ENCODE measurements at regions of chr17 and their contacts with region 1.

Region 1: DNA sequence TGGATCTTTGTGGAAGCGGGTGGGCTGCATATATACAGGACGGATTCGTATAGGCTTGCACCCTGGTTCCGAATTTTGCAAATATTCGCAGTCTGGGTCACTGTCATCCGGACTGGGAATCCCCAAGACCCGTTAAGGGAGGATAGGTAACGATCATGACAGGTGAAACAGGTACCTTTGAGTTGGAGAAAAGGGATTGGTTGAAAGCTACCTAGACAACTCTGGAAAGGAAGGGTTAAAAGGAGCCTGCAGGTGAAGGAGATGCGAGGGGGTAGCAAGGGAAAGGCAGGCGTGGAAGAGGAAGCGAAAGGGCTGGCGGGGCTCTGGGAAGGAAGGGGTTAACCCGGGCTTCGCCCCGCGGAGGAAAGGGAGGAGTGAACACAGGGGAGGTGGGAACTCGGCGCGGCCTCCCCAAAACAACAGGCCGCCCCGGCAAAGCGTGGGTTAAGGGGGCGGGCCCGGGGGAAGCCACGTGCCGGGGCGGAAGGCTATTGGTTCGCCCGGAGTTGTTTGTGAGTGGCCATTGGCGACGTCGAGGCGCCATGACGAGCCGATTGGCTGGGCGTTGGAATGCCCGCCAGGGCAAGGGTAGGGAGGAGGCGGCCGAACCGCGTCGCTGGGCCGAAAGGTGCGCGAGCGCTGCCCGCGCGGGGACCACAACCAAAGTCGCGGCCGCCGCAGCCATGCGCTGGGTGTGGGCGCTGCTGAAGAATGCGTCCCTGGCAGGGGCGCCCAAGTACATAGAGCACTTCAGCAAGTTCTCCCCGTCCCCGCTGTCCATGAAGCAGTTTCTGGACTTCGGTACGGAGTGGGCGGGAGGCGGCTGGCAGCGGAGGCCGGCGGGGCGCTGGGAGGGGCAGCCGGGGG is at the start of gene PDK2:
- DNase-seq: peak; percentile 96 to 98 (median 98)
- H3K4me3 ChIP-seq: peak within 1 kb of the TSS; percentile 81 to 97
- H3K4me3 Mint-ChIP-seq: peak within 1 kb of the TSS; percentile 95 to 99 (median 98)
- H3K27ac ChIP-seq: peak within 1 kb of the TSS; percentile 80
- H3K27ac Mint-ChIP-seq: peak within 1 kb of the TSS; percentile 92 to 99 (median 97)
- H3K4me1 ChIP-seq: peaks cover 25% of the 10 kb centered on the region
- H3K4me1 Mint-ChIP-seq: peaks cover 14 to 36% (median 24%) of the 10 kb centered on the region in 4 donors
- H3K27me3 ChIP-seq: no peaks in the 10 kb centered on the region
- H3K27me3 Mint-ChIP-seq: peaks cover 0 to 2% of the 10 kb centered on the region in 2 donors
- total RNA-seq, gene PDK2: 39.1 to 40.6 TPM

Region 2: GRCh38 chr17:49677933-49678847 is 416.8 kb before region 1 on chr17 and contains the start of gene SPOP:
- CTCF ChIA-PET with region 1: interaction called, 3 read pairs
- POLR2A ChIA-PET with region 1: interaction called, 3 read pairs
- intact Hi-C with region 1: loop called (anchors 1 kb)
- DNase-seq: peak; percentile 99 to 100 (median 100)
- H3K4me3 ChIP-seq: peak within 1 kb of the TSS; percentile 95 to 100
- H3K4me3 Mint-ChIP-seq: peak within 1 kb of the TSS; percentile 91 to 99 (median 94)
- H3K27ac ChIP-seq: peak within 1 kb of the TSS; percentile 94
- H3K27ac Mint-ChIP-seq: peak within 1 kb of the TSS; percentile 93 to 99 (median 98)
- H3K4me1 ChIP-seq: peaks cover 42% of the 10 kb centered on the region
- H3K4me1 Mint-ChIP-seq: peaks cover 35 to 52% (median 42%) of the 10 kb centered on the region in 4 donors
- H3K27me3 ChIP-seq: no peaks in the 10 kb centered on the region
- H3K27me3 Mint-ChIP-seq: peaks cover 0 to 1% of the 10 kb centered on the region in 2 donors
- total RNA-seq, gene SPOP: 83.1 to 86.1 TPM

Region 3: DNA sequence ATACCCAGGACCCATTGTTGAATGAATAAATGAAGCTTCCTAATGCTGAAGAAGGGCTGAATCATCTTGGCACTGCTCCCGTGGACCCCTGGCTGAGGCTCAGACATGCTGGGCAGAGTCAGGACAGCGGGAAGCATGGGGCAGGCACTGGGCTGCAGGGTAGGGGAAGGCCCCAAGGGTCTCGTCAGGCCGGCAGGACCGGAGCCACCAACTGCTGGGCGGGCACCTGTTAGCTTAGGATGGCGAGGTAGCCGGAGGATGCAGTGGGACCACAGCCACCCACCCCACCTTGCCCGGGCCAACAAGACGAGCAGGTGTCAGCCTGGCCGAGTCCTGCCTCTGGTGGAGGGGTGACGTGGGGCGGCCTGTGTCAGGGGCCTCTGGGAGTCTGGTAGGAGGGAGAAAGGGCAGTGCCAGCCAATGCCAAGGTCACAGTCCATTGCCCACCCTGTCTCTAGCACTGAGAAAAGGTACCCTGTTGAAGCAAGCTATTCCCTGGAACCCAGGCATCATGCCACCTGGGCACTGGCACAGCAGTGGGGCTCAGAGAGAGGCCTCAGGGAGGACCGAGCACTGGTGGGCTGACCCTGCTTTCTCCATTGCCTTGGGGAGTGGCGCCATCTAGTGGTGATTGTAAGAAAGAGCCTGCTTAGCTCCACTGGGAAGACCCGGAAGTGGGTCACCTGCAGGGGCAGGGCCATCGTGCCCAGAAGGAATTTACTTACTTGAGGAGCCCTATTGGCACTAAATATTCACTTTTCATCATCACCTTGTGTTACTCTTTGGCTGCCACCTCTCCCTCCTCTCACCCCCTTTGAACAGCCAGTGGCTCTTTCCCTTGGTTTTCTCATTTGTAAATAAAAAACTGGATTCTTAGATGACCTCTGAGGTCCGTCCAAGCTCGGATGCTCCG is 96.9 kb before region 1 on chr17:
- CTCF ChIA-PET with region 1: interaction called, 12 read pairs
- POLR2A ChIA-PET with region 1: interaction called, 3 read pairs
- intact Hi-C with region 1: no loop called
- DNase-seq: peak; percentile 80 to 83 (median 82)
- H3K4me3 ChIP-seq: no peak overlapping the region
- H3K4me3 Mint-ChIP-seq: peak overlapping the region in 1 of 8 donors; percentile 43
- H3K27ac ChIP-seq: no peak overlapping the region
- H3K27ac Mint-ChIP-seq: peak overlapping the region in 1 of 7 donors; percentile 55
- H3K4me1 ChIP-seq: peaks cover 35% of the 10 kb centered on the region
- H3K4me1 Mint-ChIP-seq: peaks cover 19 to 43% (median 25%) of the 10 kb centered on the region in 4 donors
- H3K27me3 ChIP-seq: peaks cover 61% of the 10 kb centered on the region
- H3K27me3 Mint-ChIP-seq: peaks cover 62 to 64% of the 10 kb centered on the region in 2 donors

Region 4: DNA sequence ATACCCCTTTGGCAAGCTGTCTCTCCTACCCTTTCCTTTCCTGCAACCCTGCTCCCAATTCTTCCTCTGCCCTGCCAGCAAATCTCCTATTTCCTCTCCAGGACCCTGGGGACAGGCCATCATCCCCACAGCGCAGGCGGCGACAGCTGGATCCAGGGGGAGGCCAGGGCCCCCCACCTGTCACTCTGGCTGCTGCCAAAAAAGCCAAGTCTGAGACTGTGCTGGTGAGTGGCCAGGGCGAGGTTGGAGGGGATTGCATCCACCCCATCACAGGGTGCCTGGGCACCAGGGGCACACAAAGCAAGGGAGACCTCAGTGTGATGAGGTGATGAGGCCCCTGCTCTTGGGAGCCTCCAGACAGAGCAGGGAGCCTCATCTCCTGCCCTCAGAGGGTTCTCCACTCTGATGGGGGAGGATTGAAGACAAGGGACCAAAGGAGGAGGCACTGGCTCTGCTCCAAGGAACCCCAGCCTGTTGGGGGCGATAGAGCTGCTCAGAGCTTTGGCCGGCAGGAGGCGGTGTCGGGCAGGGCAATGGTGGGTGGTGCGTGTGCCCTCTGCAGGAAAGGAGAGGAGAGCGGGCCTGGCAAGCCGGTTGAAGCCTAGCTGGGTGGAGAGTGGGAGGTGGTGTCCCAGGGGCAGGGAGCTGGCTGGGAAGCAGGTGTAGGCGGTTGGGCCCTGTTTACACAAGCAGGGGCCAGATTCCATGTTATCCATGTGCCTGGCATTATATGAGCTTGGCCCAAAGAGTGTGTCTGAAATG is 15.5 kb before region 1 on chr17:
- CTCF ChIA-PET with region 1: interaction called, 13 read pairs
- POLR2A ChIA-PET with region 1: interaction called, 4 read pairs
- intact Hi-C with region 1: no loop called
- DNase-seq: peak in 1 of 5 donors; percentile 29
- H3K4me3 ChIP-seq: no peak overlapping the region
- H3K4me3 Mint-ChIP-seq: no peak overlapping the region
- H3K27ac ChIP-seq: no peak overlapping the region
- H3K27ac Mint-ChIP-seq: no peak overlapping the region
- H3K4me1 ChIP-seq: no peaks in the 10 kb centered on the region
- H3K4me1 Mint-ChIP-seq: no peaks in the 10 kb centered on the region
- H3K27me3 ChIP-seq: no peaks in the 10 kb centered on the region
- H3K27me3 Mint-ChIP-seq: no peaks in the 10 kb centered on the region

Region 5: GRCh38 chr17:50120475-50121253 is 25.7 kb after region 1 on chr17:
- CTCF ChIA-PET with region 1: interaction called, 22 read pairs
- POLR2A ChIA-PET with region 1: interaction called, 7 read pairs
- intact Hi-C with region 1: no loop called
- DNase-seq: no peak
- H3K4me3 ChIP-seq: no peak overlapping the region
- H3K4me3 Mint-ChIP-seq: no peak overlapping the region
- H3K27ac ChIP-seq: no peak overlapping the region
- H3K27ac Mint-ChIP-seq: no peak overlapping the region
- H3K4me1 ChIP-seq: peaks cover 13% of the 10 kb centered on the region
- H3K4me1 Mint-ChIP-seq: peaks cover 3 to 8% (median 6%) of the 10 kb centered on the region in 4 donors
- H3K27me3 ChIP-seq: peaks cover 7% of the 10 kb centered on the region
- H3K27me3 Mint-ChIP-seq: peaks cover 11 to 14% of the 10 kb centered on the region in 2 donors

Region 6: DNA sequence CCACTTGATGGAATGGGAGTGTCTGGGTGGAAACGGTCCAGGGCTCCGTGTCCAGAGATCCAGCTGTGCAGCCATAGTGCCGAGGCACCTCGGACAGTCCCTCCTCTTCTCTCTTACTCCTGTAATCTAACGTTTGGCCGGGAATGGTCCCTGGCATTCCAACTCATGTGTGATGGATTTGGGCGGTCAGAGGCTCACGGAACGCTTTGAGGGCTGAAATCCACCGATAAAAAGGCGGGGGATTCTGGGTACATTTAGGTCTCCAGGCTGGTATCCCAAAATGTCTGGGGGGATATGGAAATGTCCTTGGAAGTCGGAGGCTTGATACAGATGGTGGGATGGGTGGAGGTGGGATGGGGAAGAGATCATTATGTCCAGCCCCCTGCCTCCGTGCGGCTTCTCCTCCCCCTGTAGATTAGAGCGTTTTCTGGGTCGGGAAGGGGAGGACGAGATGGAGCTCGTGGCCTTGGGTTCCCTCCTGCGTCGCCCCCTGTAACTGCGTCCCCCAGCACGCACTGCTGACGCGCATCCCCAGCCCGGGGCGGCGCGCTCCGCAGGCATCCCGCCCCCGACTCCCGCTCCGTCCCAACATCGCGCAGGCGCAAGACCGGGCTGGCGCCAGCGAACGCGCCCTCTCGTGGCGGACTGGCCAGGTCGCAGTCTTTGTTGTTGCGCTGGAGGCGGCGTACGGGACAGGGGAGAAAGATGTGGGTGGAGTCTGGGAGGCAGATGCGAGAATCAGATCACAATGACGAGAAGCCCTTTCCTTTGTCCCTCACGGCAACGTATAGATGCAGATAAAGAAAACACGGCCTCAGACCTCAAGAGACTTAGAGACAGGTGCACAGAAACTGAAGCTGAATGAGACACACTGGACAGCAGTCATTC is 66.3 kb after region 1 on chr17:
- CTCF ChIA-PET with region 1: interaction called, 23 read pairs
- POLR2A ChIA-PET with region 1: interaction called, 11 read pairs
- intact Hi-C with region 1: loop called (anchors 2 kb)
- DNase-seq: peak; percentile 92 to 95 (median 93)
- H3K4me3 ChIP-seq: peak overlapping the region; percentile 76 to 78
- H3K4me3 Mint-ChIP-seq: peak overlapping the region; percentile 59 to 86 (median 74)
- H3K27ac ChIP-seq: peak overlapping the region; percentile 46
- H3K27ac Mint-ChIP-seq: peak overlapping the region; percentile 45 to 99 (median 93)
- H3K4me1 ChIP-seq: peaks cover 34% of the 10 kb centered on the region
- H3K4me1 Mint-ChIP-seq: peaks cover 23 to 53% (median 30%) of the 10 kb centered on the region in 4 donors
- H3K27me3 ChIP-seq: no peaks in the 10 kb centered on the region
- H3K27me3 Mint-ChIP-seq: no peaks in the 10 kb centered on the region

Region 7: GRCh38 chr17:50238601-50239280 is 143.8 kb after region 1 on chr17:
- CTCF ChIA-PET with region 1: no interaction called
- POLR2A ChIA-PET with region 1: no interaction called
- intact Hi-C with region 1: no loop called
- DNase-seq: no peak
- H3K4me3 ChIP-seq: no peak overlapping the region
- H3K4me3 Mint-ChIP-seq: no peak overlapping the region
- H3K27ac ChIP-seq: no peak overlapping the region
- H3K27ac Mint-ChIP-seq: no peak overlapping the region
- H3K4me1 ChIP-seq: no peaks in the 10 kb centered on the region
- H3K4me1 Mint-ChIP-seq: peaks cover 0 to 2% (median 0%) of the 10 kb centered on the region in 4 donors
- H3K27me3 ChIP-seq: peaks cover 8% of the 10 kb centered on the region
- H3K27me3 Mint-ChIP-seq: peaks cover 27 to 40% of the 10 kb centered on the region in 2 donors

Region 8: DNA sequence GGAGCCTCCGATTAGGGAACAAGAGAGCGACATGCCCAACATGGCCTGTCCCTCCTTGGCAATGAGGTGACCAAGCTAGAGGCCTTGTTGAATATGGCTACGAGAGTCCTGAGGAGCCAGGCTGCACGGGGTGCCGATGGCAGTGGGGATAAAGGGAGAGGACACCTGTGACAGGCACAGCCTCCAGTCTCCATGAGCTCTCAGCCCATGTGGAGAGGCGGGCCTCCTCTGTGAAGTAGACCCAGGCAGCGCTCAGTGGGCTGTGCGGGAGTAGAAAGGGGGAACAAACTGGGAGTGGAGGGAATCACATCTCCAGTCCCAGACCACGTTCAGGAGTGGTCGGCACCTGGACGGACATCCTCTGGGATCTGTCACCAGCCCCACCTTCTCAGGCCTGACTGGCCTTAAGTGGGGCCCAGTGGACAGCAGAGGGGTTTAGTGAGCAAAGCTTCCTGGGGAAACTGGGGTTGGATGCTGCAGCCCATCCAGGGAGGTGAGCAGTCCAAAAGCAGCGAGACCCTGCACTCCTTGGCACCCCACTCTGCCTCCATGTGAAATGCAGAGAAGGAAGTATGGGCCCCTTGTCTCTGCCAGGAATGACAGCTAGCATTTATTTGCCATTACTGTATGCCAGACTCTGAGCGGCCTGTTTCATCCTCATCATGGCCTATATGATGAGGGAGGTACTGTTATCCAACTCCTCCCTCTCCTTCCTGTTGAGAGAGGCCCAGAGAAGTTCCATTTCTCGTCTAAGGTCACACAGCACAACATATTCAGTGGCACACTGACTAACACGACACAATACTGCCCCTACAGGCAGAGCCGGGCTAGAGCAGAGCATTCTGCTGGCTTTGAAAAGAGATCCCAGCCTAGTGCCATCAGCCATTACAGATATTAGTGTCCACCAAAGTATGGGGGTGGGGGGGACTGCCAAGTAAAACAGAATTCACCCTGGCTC is 174.8 kb after region 1 on chr17:
- CTCF ChIA-PET with region 1: interaction called, 5 read pairs
- POLR2A ChIA-PET with region 1: no interaction called
- intact Hi-C with region 1: loop called (anchors 1 kb)
- DNase-seq: peak; percentile 33 to 53 (median 42)
- H3K4me3 ChIP-seq: no peak overlapping the region
- H3K4me3 Mint-ChIP-seq: no peak overlapping the region
- H3K27ac ChIP-seq: no peak overlapping the region
- H3K27ac Mint-ChIP-seq: no peak overlapping the region
- H3K4me1 ChIP-seq: peaks cover 4% of the 10 kb centered on the region
- H3K4me1 Mint-ChIP-seq: peaks cover 6 to 8% (median 7%) of the 10 kb centered on the region in 4 donors
- H3K27me3 ChIP-seq: peaks cover 4% of the 10 kb centered on the region
- H3K27me3 Mint-ChIP-seq: peaks cover 6 to 11% of the 10 kb centered on the region in 2 donors